CD8-positive, alpha-beta T cell (primary cell): ENCODE measurements at regions of chrX and their contacts with region 1.

Region 1: GRCh38 chrX:153971450-153972367 is at the start of gene HCFC1:
- DNase-seq: peak; percentile 78 to 96 (median 92)
- ATAC-seq: peak; percentile 45
- H3K4me3 ChIP-seq: peak within 1 kb of the TSS; percentile 94 to 97
- H3K4me3 Mint-ChIP-seq: peak within 1 kb of the TSS; percentile 100
- H3K27ac ChIP-seq: peak within 1 kb of the TSS; percentile 94 to 99
- H3K27ac Mint-ChIP-seq: peak within 1 kb of the TSS; percentile 100
- H3K4me1 ChIP-seq: peaks cover 36% of the 10 kb centered on the region
- H3K4me1 Mint-ChIP-seq: peaks cover 40% of the 10 kb centered on the region
- H3K27me3 ChIP-seq: no peaks in the 10 kb centered on the region
- H3K27me3 Mint-ChIP-seq: no peaks in the 10 kb centered on the region
- CTCF ChIP-seq: no peak
- total RNA-seq, gene HCFC1: 49.1 to 56.3 TPM

Region 2: DNA sequence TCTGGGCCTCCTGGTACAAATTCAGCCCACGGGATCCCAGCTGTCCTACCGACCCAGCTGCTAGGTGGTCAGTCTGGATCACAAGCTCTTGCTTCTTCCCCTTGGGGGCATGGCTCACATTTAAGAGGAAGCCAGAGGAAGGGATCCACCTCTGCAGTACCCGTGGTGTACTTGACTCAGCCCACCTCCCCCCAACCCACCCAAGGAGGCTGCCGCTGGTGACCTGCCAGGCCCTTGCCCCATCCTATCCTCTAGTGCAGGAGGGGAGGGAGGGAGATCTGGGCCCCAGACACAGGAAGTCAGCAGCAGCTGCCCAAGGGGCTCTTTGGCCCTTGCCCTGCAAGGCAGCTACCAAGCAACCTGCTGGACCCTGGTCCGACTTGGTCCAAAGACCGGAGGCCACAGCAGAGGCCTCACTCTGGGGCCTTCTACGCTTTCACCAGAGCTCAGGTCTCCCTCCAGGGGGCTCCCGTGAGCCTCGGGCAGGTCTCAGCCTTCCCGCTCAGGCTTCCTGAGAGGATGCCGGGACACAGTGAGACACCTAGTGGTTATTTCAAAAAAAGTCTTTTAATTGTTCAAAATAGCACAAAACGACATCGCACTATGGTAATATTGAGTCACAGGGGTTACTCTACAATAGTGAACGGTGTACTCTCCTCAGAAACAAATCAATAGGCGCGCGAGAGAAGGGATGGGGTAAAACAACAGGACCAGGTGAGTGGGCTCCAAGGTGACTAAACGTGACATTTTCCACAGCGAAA is 24.5 kb before region 1 on chrX:
- CTCF ChIA-PET with region 1: interaction called, 31 read pairs
- POLR2A ChIA-PET with region 1: interaction called, 13 read pairs
- intact Hi-C with region 1: loop called in 1 of 2 experiments (anchors 2 kb)
- DNase-seq: peak; percentile 57 to 87 (median 81)
- ATAC-seq: peak; percentile 87
- H3K4me3 ChIP-seq: no peak overlapping the region
- H3K4me3 Mint-ChIP-seq: peak overlapping the region; percentile 27
- H3K27ac ChIP-seq: peak overlapping the region in 1 of 2 experiments; percentile 53
- H3K27ac Mint-ChIP-seq: peak overlapping the region; percentile 81
- H3K4me1 ChIP-seq: peaks cover 42% of the 10 kb centered on the region
- H3K4me1 Mint-ChIP-seq: peaks cover 13% of the 10 kb centered on the region
- H3K27me3 ChIP-seq: no peaks in the 10 kb centered on the region
- H3K27me3 Mint-ChIP-seq: no peaks in the 10 kb centered on the region
- CTCF ChIP-seq: peak; percentile 71

Region 3: GRCh38 chrX:154019633-154020528 is 48.2 kb after region 1 on chrX and contains the start of gene IRAK1:
- CTCF ChIA-PET with region 1: interaction called, 5 read pairs
- POLR2A ChIA-PET with region 1: interaction called, 14 read pairs
- intact Hi-C with region 1: loop called in 1 of 2 experiments (anchors 1 kb)
- DNase-seq: peak in 8 of 9 experiments; percentile 29 to 78 (median 54)
- ATAC-seq: peak; percentile 68
- H3K4me3 ChIP-seq: peak within 1 kb of the TSS; percentile 54
- H3K4me3 Mint-ChIP-seq: peak within 1 kb of the TSS; percentile 83
- H3K27ac ChIP-seq: peak within 1 kb of the TSS; percentile 56 to 76
- H3K27ac Mint-ChIP-seq: peak within 1 kb of the TSS; percentile 91
- H3K4me1 ChIP-seq: peaks cover 22% of the 10 kb centered on the region
- H3K4me1 Mint-ChIP-seq: peaks cover 24% of the 10 kb centered on the region
- H3K27me3 ChIP-seq: no peaks in the 10 kb centered on the region
- H3K27me3 Mint-ChIP-seq: no peaks in the 10 kb centered on the region
- CTCF ChIP-seq: no peak
- total RNA-seq, gene IRAK1: 84.8 to 92.5 TPM

Region 4: GRCh38 chrX:154378782-154379591 is 407.3 kb after region 1 on chrX and contains the start of gene EMD:
- CTCF ChIA-PET with region 1: no interaction called
- POLR2A ChIA-PET with region 1: no interaction called
- intact Hi-C with region 1: loop called in 1 of 2 experiments (anchors 5 kb)
- DNase-seq: peak; percentile 88 to 98 (median 94)
- ATAC-seq: peak; percentile 79
- H3K4me3 ChIP-seq: peak within 1 kb of the TSS; percentile 73 to 75
- H3K4me3 Mint-ChIP-seq: peak within 1 kb of the TSS; percentile 85
- H3K27ac ChIP-seq: peak within 1 kb of the TSS; percentile 98 to 99
- H3K27ac Mint-ChIP-seq: peak within 1 kb of the TSS; percentile 93
- H3K4me1 ChIP-seq: peaks cover 28% of the 10 kb centered on the region
- H3K4me1 Mint-ChIP-seq: peaks cover 18% of the 10 kb centered on the region
- H3K27me3 ChIP-seq: no peaks in the 10 kb centered on the region
- H3K27me3 Mint-ChIP-seq: no peaks in the 10 kb centered on the region
- CTCF ChIP-seq: no peak
- total RNA-seq, gene EMD: 176 TPM

Region 5: GRCh38 chrX:154478728-154479622 is 507.3 kb after region 1 on chrX and contains the start of gene LAGE3:
- CTCF ChIA-PET with region 1: no interaction called
- POLR2A ChIA-PET with region 1: no interaction called
- intact Hi-C with region 1: loop called in 1 of 2 experiments (anchors 5 kb)
- DNase-seq: peak; percentile 86 to 98 (median 93)
- ATAC-seq: peak; percentile 93
- H3K4me3 ChIP-seq: peak within 1 kb of the TSS; percentile 54 to 72
- H3K4me3 Mint-ChIP-seq: peak within 1 kb of the TSS; percentile 82
- H3K27ac ChIP-seq: peak within 1 kb of the TSS; percentile 66 to 82
- H3K27ac Mint-ChIP-seq: peak within 1 kb of the TSS; percentile 84
- H3K4me1 ChIP-seq: peaks cover 28% of the 10 kb centered on the region
- H3K4me1 Mint-ChIP-seq: peaks cover 25% of the 10 kb centered on the region
- H3K27me3 ChIP-seq: no peaks in the 10 kb centered on the region
- H3K27me3 Mint-ChIP-seq: no peaks in the 10 kb centered on the region
- CTCF ChIP-seq: no peak
- total RNA-seq, gene LAGE3: 6.3 to 6.6 TPM